Caco-2 (cell line): ENCODE measurements at regions of chr12 and their contacts with region 1.

Region 1: GRCh38 chr12:93742110-93742934 is 65.1 kb downstream of the CRADD start:
- DNase-seq: peak; percentile 64 to 83
- H3K4me3 ChIP-seq: peak overlapping the region; percentile 86
- H3K4me3 Mint-ChIP-seq: peak overlapping the region; percentile 74
- H3K27ac Mint-ChIP-seq: peak overlapping the region; percentile 80
- H3K4me1 ChIP-seq: peaks cover 40% of the 10 kb centered on the region
- H3K4me1 Mint-ChIP-seq: peaks cover 15% of the 10 kb centered on the region
- H3K27me3 ChIP-seq: no peaks in the 10 kb centered on the region
- H3K27me3 Mint-ChIP-seq: no peaks in the 10 kb centered on the region
- CTCF ChIP-seq: peak; percentile 27 to 47

Region 2: DNA sequence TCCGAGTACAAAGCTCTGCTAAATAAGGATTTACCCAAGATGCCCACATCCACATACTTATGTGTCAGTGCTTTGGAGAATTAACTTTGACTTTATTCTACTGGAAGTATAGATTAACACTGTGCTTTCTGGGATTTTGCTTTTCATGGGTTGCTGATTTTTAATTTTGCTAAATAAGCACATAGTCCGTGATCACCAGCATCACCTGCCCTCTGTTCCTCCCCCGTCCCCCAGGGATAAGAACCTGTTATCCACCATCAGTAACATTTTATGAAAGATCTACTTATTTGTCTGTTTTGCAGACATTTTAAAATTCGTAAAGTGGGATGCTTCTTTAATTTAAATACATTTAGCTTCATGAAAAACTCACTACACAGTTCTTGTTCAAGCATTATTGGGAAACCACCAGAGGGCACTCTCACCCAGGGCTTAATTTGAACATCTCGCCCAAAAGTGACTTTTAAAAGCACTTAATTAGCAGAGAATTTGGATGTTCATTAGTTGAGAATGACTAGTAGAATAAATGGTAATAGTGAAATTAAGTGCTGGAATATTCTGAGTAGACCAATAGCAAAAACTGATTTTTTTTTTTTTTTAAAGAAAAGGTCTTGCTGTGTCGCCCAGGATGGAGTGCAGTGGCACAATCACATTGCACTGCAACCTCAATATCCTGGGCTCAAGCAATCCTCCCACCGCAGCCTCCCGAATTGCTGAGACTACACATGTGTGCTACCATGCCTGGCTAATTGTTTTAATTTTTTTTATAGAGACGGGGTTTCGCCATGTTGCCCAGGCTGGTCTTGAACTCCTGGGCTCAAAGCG is 239.3 kb before region 1 on chr12:
- CTCF ChIA-PET with region 1: no interaction called
- POLR2A ChIA-PET with region 1: no interaction called
- intact Hi-C with region 1: loop called (anchors 2 kb)
- DNase-seq: peak in 1 of 2 experiments; percentile 67
- H3K4me3 ChIP-seq: no peak overlapping the region
- H3K4me3 Mint-ChIP-seq: no peak overlapping the region
- H3K27ac Mint-ChIP-seq: no peak overlapping the region
- H3K4me1 ChIP-seq: no peaks in the 10 kb centered on the region
- H3K4me1 Mint-ChIP-seq: no peaks in the 10 kb centered on the region
- H3K27me3 ChIP-seq: no peaks in the 10 kb centered on the region
- H3K27me3 Mint-ChIP-seq: no peaks in the 10 kb centered on the region
- CTCF ChIP-seq: peak; percentile 75 to 76

Region 3: GRCh38 chr12:93677195-93678064 is 64.9 kb before region 1 on chr12 and contains the start of gene CRADD:
- CTCF ChIA-PET with region 1: no interaction called
- POLR2A ChIA-PET with region 1: no interaction called
- intact Hi-C with region 1: loop called (anchors 1 kb)
- DNase-seq: peak; percentile 91
- H3K4me3 ChIP-seq: peak within 1 kb of the TSS; percentile 63
- H3K4me3 Mint-ChIP-seq: peak within 1 kb of the TSS; percentile 89
- H3K27ac Mint-ChIP-seq: peak within 1 kb of the TSS; percentile 98
- H3K4me1 ChIP-seq: peaks cover 17% of the 10 kb centered on the region
- H3K4me1 Mint-ChIP-seq: peaks cover 21% of the 10 kb centered on the region
- H3K27me3 ChIP-seq: no peaks in the 10 kb centered on the region
- H3K27me3 Mint-ChIP-seq: no peaks in the 10 kb centered on the region
- CTCF ChIP-seq: no peak
- total RNA-seq, gene CRADD: 29.2 and 30.6 TPM in 2 replicates

Region 4: GRCh38 chr12:93699271-93700145 is 42.8 kb before region 1 on chr12:
- CTCF ChIA-PET with region 1: interaction called, 3 read pairs
- POLR2A ChIA-PET with region 1: interaction called, 6 read pairs
- intact Hi-C with region 1: loop called (anchors 1 kb)
- DNase-seq: peak in 1 of 2 experiments; percentile 50
- H3K4me3 ChIP-seq: no peak overlapping the region
- H3K4me3 Mint-ChIP-seq: peak overlapping the region; percentile 79
- H3K27ac Mint-ChIP-seq: peak overlapping the region; percentile 93
- H3K4me1 ChIP-seq: peaks cover 52% of the 10 kb centered on the region
- H3K4me1 Mint-ChIP-seq: peaks cover 45% of the 10 kb centered on the region
- H3K27me3 ChIP-seq: no peaks in the 10 kb centered on the region
- H3K27me3 Mint-ChIP-seq: no peaks in the 10 kb centered on the region
- CTCF ChIP-seq: no peak

Region 5: GRCh38 chr12:93759512-93760081 is 17.3 kb after region 1 on chr12:
- CTCF ChIA-PET with region 1: no interaction called
- POLR2A ChIA-PET with region 1: no interaction called
- intact Hi-C with region 1: loop called (anchors 2 kb)
- DNase-seq: no peak
- H3K4me3 ChIP-seq: no peak overlapping the region
- H3K4me3 Mint-ChIP-seq: peak overlapping the region; percentile 32
- H3K27ac Mint-ChIP-seq: peak overlapping the region; percentile 25
- H3K4me1 ChIP-seq: peaks cover 41% of the 10 kb centered on the region
- H3K4me1 Mint-ChIP-seq: peaks cover 19% of the 10 kb centered on the region
- H3K27me3 ChIP-seq: no peaks in the 10 kb centered on the region
- H3K27me3 Mint-ChIP-seq: no peaks in the 10 kb centered on the region
- CTCF ChIP-seq: no peak

Region 6: DNA sequence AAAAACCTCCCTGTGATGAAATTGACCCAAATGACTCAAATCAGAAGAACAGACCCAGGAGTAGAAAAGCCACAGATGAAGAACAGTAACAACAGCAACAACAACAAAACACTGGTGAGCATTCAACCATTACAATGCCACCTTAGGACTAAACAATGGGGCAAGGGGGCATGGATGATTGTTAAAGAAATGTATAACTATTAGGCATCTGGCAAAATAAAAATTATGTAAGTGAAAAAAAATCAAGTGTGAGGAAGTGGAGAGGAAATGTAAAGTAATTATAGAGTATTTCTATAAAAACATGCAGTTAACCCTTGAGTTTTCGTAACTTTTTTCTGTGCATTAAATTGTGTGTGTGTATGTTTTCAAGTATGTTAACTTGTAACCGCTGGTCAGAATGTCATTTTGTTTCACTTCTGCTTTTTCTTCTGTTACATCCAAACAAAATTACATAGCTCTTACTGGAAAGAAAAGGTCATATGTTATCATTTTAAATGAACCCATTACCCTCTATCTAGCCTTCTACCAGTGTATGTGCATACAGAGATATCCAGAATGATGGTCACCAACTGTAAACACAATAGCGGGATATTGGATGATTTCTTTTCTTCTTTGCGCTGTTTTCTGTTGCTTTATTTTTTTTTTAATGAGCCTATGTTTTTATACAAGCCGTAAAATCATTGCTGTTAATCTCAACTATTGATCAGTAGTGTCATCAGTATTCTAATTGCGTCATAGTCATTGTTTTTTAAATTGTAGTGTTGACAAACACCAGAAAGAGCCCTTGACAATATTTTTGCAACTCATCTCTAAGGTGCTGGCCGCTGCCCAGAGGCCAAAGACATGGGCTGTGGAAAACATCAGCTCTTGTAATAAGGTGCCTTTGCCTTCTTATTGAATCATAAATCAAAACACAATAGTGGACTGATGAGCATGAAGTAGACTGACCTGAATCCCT is 105.5 kb after region 1 on chr12:
- CTCF ChIA-PET with region 1: no interaction called
- POLR2A ChIA-PET with region 1: no interaction called
- intact Hi-C with region 1: no loop called
- DNase-seq: no peak
- H3K4me3 ChIP-seq: no peak overlapping the region
- H3K4me3 Mint-ChIP-seq: no peak overlapping the region
- H3K27ac Mint-ChIP-seq: no peak overlapping the region
- H3K4me1 ChIP-seq: no peaks in the 10 kb centered on the region
- H3K4me1 Mint-ChIP-seq: no peaks in the 10 kb centered on the region
- H3K27me3 ChIP-seq: no peaks in the 10 kb centered on the region
- H3K27me3 Mint-ChIP-seq: no peaks in the 10 kb centered on the region
- CTCF ChIP-seq: no peak

Region 7: DNA sequence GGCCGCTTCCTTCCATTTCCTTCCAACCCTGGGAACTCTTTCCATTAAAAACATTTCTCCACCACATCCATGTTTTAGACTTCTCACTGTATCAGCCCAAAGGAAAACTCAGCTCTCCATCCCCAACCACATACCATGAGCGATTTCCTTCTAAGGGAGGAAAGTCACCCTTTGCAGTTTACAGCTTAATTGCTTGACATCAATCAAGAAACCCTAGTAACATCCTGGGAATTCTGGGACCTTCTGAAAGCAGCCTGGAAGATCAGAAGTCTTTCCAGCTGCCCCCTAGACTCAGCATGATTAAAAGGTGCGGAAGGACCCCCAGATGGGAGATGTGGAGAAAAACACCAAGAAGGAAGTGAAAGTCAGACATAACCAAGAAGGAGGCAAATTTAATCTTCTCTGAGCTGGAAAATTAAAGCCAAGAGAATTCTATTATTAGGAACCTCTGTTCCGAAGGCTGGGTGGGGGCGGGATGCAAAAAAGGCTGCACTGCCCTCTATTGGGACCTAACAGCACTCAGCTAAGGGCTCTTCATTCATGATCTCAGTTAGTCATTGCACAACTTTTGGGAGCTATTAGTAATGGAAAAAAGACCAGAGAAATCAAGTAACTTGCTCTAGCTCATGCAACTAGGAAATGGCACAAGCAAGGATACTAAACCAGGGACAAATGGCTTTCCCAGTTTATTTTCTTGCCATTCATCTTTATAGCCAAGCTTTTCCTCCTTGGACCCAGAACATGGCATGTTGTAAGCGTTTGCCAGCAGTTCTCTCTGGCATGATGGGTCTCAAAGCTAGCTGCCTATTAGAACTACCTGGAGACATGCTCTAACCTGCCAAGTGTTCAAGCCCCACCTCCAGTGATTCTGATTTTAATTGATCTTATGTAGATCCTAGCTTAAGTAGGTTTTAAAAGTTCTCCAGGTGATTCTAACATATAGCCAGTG is 332.9 kb after region 1 on chr12:
- CTCF ChIA-PET with region 1: interaction called, 13 read pairs
- POLR2A ChIA-PET with region 1: no interaction called
- intact Hi-C with region 1: no loop called
- DNase-seq: peak in 1 of 2 experiments; percentile 35
- H3K4me3 ChIP-seq: no peak overlapping the region
- H3K4me3 Mint-ChIP-seq: no peak overlapping the region
- H3K27ac Mint-ChIP-seq: no peak overlapping the region
- H3K4me1 ChIP-seq: peaks cover 24% of the 10 kb centered on the region
- H3K4me1 Mint-ChIP-seq: peaks cover 29% of the 10 kb centered on the region
- H3K27me3 ChIP-seq: no peaks in the 10 kb centered on the region
- H3K27me3 Mint-ChIP-seq: no peaks in the 10 kb centered on the region
- CTCF ChIP-seq: peak; percentile 44 to 62

Region 8: GRCh38 chr12:94092516-94093241 is 350.4 kb after region 1 on chr12:
- CTCF ChIA-PET with region 1: no interaction called
- POLR2A ChIA-PET with region 1: no interaction called
- intact Hi-C with region 1: no loop called
- DNase-seq: no peak
- H3K4me3 ChIP-seq: no peak overlapping the region
- H3K4me3 Mint-ChIP-seq: no peak overlapping the region
- H3K27ac Mint-ChIP-seq: no peak overlapping the region
- H3K4me1 ChIP-seq: no peaks in the 10 kb centered on the region
- H3K4me1 Mint-ChIP-seq: no peaks in the 10 kb centered on the region
- H3K27me3 ChIP-seq: no peaks in the 10 kb centered on the region
- H3K27me3 Mint-ChIP-seq: no peaks in the 10 kb centered on the region
- CTCF ChIP-seq: no peak

Region 9: DNA sequence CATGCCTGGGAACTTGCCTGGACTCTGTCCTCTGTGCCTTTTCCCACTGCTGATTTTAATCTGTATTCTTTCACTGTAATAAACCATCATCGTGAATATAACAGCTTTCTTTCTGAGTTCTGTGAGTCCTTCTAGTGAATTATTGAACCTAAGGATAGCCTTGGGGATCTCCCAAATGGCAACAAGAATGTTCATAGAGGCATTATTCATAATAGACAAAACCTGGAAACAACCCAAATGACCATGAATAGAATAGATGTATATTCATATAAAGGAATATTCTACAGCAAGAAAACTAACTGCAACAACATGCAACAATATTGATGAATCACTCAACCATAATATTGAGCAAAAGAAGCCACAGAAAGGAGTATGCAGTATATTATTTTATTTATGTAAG is 762.1 kb after region 1 on chr12:
- CTCF ChIA-PET with region 1: no interaction called
- POLR2A ChIA-PET with region 1: no interaction called
- intact Hi-C with region 1: no loop called
- DNase-seq: no peak
- H3K4me3 ChIP-seq: no peak overlapping the region
- H3K4me3 Mint-ChIP-seq: no peak overlapping the region
- H3K27ac Mint-ChIP-seq: no peak overlapping the region
- H3K4me1 ChIP-seq: no peaks in the 10 kb centered on the region
- H3K4me1 Mint-ChIP-seq: no peaks in the 10 kb centered on the region
- H3K27me3 ChIP-seq: no peaks in the 10 kb centered on the region
- H3K27me3 Mint-ChIP-seq: peaks cover 2% of the 10 kb centered on the region
- CTCF ChIP-seq: no peak